Activated CD4-positive, alpha-beta memory T cell treated with anti-CD3 and anti-CD28 coated beads for 36 hours (primary cell): ENCODE measurements at regions of chr7 and their contacts with region 1.

Region 1: GRCh38 chr7:43925984-43926797 is at the start of gene UBE2D4:
- DNase-seq: peak; percentile 93
- H3K4me3 Mint-ChIP-seq: peak within 1 kb of the TSS; percentile 88
- H3K27ac Mint-ChIP-seq: peak within 1 kb of the TSS; percentile 86
- H3K4me1 Mint-ChIP-seq: peaks cover 26% of the 10 kb centered on the region
- H3K27me3 Mint-ChIP-seq: no peaks in the 10 kb centered on the region
- total RNA-seq, gene UBE2D4: 11.3 to 11.8 TPM

Region 2: DNA sequence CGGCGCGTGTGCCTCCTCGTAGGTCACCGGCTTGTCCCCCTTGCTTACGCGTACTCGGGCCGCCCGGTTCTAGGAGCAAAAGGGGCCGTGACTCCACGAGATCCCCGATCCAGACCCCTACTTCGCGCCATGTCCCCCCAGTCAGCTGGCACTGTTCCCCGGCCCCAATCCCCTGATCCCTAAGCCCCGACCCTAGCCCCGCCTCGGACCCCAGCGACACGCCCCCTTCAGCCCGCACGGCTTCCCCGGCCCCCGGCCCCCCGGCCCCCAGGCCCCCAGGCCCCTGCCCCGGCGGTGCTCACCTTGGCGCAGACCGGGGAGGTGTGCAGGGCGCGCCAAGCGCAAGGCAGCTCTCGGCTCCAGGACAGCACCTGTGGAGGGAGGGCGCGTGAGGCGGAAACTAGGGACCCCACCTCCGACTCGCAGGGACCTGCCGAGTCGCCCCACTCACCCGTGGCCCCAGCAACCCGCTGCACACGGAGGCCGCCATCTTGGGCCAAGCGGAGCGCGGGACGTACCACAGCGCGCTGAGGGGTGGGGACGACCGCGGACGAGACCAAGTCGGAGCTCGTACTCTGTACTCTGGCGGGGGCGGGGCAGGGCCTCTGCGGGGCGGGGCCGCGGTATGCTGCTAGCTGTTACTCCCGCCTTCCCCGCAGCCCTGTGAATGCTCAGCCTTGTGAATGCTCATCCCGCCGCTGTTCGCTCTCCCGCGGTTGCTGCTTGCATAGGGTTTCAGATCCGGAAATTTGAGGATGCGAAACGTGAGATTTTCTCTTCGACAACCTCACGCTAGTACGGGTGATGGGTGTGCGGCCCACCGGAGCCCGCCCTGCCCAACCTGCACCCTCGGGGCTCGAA is 57.0 kb before region 1 on chr7 and contains the start of gene MRPS24:
- CTCF ChIA-PET with region 1: no interaction called
- POLR2A ChIA-PET with region 1: no interaction called
- intact Hi-C with region 1: loop called (anchors 1 kb)
- DNase-seq: peak; percentile 97
- H3K4me3 Mint-ChIP-seq: peak within 1 kb of the TSS; percentile 78
- H3K27ac Mint-ChIP-seq: peak within 1 kb of the TSS; percentile 75
- H3K4me1 Mint-ChIP-seq: peaks cover 30% of the 10 kb centered on the region
- H3K27me3 Mint-ChIP-seq: peaks cover 1% of the 10 kb centered on the region
- total RNA-seq, gene MRPS24: 115 to 128 TPM

Region 3: DNA sequence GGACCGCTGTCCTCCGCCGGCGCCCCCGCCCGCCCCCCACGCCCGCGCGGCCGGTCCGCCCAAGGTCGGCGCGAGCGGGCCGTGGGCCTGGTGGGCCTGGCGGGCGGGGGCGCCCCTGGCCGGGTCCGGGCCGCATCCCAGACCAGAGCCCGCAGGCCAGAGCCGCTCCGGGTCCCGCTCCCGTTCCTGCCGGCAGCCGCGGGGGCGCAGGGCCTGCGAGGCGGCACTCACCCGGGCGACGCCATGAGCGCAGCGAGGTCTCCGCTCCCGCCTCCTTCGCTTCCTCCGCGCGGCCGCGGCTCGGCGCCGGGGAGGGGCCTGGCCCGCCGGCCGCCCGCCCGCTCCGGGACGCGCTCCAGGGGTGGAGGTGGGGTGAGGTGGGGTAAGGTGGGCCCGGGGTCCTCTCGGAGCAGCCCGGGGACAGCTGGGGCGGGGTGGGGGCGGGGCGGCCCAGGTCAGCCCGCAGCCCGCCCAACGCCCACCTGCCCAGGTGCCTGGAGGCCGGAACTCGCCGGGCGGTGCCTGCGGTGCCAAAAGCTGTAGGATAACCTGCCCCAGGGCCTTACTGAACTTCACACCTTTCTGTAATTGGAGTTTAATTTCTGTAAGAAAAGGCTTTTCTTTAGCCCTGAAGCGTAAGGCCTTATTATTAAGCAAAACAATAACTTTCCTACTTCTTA is 19.7 kb before region 1 on chr7 and contains the start of gene URGCP:
- CTCF ChIA-PET with region 1: interaction called, 6 read pairs
- POLR2A ChIA-PET with region 1: interaction called, 3 read pairs
- intact Hi-C with region 1: loop called (anchors 1 kb)
- DNase-seq: peak; percentile 61
- H3K4me3 Mint-ChIP-seq: peak within 1 kb of the TSS; percentile 90
- H3K27ac Mint-ChIP-seq: peak within 1 kb of the TSS; percentile 80
- H3K4me1 Mint-ChIP-seq: peaks cover 37% of the 10 kb centered on the region
- H3K27me3 Mint-ChIP-seq: no peaks in the 10 kb centered on the region
- total RNA-seq, gene URGCP: 22.3 to 24.0 TPM

Region 4: DNA sequence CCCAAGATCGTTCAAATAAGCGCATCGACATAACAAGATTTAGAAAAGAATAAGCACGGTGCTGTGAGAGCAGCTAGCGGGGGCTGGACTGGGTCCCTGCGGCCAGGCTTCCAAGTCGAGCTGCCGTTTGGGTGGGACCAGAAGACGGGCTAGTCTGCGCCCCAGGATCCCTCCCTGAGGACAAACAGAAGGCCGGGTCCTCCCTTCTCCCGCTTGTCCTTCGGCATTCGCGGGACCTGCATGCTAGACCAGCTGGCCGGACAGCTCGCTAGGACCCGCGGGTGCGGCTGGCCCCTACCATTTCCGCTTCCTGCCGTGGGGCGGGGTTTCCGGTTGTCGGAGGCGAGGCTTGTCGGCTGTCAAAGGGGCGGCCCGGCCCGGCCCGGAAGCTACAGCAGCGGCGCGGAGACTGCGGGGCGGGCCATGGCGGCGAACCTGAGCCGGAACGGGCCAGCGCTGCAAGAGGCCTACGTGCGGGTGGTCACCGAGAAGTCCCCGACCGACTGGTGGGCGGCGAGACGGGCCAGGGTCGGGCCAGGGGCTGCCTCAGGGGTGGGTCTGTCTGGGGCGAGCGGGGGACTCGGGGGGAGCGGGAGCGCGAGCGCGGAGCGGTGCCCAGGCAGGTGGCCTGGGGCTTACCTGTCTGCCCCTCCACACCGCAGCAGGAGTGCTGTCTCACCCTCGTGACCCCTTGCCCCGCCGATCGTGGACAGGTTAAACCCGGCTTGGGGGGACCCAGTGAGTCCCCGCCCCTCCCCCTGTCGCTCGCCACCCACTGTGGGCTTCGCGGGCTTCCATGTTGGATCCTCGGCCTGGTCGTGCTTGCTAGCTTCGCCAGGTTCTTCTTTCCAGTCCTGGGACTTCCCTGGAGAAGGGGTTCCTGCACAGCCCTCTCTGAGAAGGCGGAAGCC is 118.4 kb after region 1 on chr7 and contains the start of gene DBNL:
- CTCF ChIA-PET with region 1: no interaction called
- POLR2A ChIA-PET with region 1: no interaction called
- intact Hi-C with region 1: loop called (anchors 10 kb)
- DNase-seq: peak; percentile 95
- H3K4me3 Mint-ChIP-seq: peak within 1 kb of the TSS; percentile 90
- H3K27ac Mint-ChIP-seq: peak within 1 kb of the TSS; percentile 88
- H3K4me1 Mint-ChIP-seq: peaks cover 45% of the 10 kb centered on the region
- H3K27me3 Mint-ChIP-seq: no peaks in the 10 kb centered on the region
- total RNA-seq, gene DBNL: 128 to 129 TPM